ENCODE measurements at regions of chr18 and their contacts with region 1.

Region 1: GRCh38 chr18:31819106-31819924 is 58.6 kb upstream of the SLC25A52 start:
- DNase-seq: peak; percentile 50
- H3K4me3 ChIP-seq: no peak overlapping the region
- H3K27ac ChIP-seq: no peak overlapping the region
- H3K4me1 ChIP-seq: no peaks in the 10 kb centered on the region
- CTCF ChIP-seq: peak; percentile 81

Region 2: GRCh38 chr18:31750273-31750672 is 69.0 kb before region 1 on chr18:
- CTCF ChIA-PET with region 1: no interaction called
- POLR2A ChIA-PET with region 1: no interaction called
- intact Hi-C with region 1: no loop called
- DNase-seq: no peak
- H3K4me3 ChIP-seq: no peak overlapping the region
- H3K27ac ChIP-seq: no peak overlapping the region
- H3K4me1 ChIP-seq: no peaks in the 10 kb centered on the region
- CTCF ChIP-seq: no peak

Region 3: DNA sequence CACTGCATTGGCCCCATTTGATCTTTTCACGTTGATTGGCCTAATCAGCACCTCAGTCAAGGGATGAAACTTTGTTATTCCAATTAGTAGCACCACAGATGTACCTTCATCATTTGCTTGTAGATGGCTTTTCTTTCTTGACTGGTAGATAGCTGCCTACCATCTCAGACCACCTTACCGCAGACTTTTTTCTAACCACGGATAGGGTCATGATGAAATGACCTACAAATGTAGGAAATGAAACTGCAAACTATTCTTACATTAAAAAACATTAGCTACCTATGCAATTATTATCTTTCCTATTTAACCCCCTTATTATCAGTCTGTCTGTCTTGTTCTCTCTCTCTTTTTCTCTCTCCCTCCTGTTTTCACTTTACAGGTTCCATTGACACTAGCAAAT is 36.3 kb before region 1 on chr18:
- CTCF ChIA-PET with region 1: no interaction called
- POLR2A ChIA-PET with region 1: no interaction called
- intact Hi-C with region 1: no loop called
- DNase-seq: no peak
- H3K4me3 ChIP-seq: no peak overlapping the region
- H3K27ac ChIP-seq: no peak overlapping the region
- H3K4me1 ChIP-seq: no peaks in the 10 kb centered on the region
- CTCF ChIP-seq: no peak

Region 4: DNA sequence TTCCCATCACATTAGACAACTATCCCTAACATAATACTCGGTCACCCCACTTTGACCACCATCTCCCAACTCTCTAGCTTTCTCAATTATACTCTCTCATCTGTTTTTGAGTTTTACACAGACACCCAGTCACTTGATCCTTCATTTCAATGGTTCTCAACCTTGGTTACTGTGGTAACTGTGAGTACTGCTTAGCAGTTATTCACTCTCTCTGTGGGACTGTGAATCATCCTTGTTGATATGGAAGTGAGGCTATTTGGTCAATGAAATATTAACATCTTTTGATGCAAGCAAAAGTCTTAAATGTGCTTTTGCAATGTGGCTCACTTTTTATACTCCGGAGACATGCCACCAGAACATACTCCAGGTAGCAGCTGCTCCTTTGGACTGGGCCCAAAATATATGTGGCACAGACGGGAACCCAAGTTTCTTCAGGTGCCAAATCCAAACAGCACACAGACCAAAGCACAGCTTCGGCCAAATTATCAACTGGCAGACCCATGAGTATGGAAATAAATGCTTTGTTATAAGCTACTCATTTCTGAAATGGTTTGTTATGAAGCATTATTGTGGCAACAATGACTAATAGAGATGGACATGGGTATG is 16.3 kb after region 1 on chr18:
- CTCF ChIA-PET with region 1: no interaction called
- POLR2A ChIA-PET with region 1: no interaction called
- intact Hi-C with region 1: no loop called
- DNase-seq: no peak
- H3K4me3 ChIP-seq: no peak overlapping the region
- H3K27ac ChIP-seq: no peak overlapping the region
- H3K4me1 ChIP-seq: no peaks in the 10 kb centered on the region
- CTCF ChIP-seq: no peak

Region 5: GRCh38 chr18:31977270-31977872 is 158.1 kb after region 1 on chr18:
- CTCF ChIA-PET with region 1: no interaction called
- POLR2A ChIA-PET with region 1: no interaction called
- intact Hi-C with region 1: loop called (anchors 5 kb)
- DNase-seq: peak; percentile 48
- H3K4me3 ChIP-seq: no peak overlapping the region
- H3K27ac ChIP-seq: no peak overlapping the region
- H3K4me1 ChIP-seq: no peaks in the 10 kb centered on the region
- CTCF ChIP-seq: peak; percentile 72

Measured in OCI-LY7 (cell line).